Lower lobe of right lung (tissue), 2 donors: ENCODE measurements at regions of chr12 and their contacts with region 1.

Region 1: DNA sequence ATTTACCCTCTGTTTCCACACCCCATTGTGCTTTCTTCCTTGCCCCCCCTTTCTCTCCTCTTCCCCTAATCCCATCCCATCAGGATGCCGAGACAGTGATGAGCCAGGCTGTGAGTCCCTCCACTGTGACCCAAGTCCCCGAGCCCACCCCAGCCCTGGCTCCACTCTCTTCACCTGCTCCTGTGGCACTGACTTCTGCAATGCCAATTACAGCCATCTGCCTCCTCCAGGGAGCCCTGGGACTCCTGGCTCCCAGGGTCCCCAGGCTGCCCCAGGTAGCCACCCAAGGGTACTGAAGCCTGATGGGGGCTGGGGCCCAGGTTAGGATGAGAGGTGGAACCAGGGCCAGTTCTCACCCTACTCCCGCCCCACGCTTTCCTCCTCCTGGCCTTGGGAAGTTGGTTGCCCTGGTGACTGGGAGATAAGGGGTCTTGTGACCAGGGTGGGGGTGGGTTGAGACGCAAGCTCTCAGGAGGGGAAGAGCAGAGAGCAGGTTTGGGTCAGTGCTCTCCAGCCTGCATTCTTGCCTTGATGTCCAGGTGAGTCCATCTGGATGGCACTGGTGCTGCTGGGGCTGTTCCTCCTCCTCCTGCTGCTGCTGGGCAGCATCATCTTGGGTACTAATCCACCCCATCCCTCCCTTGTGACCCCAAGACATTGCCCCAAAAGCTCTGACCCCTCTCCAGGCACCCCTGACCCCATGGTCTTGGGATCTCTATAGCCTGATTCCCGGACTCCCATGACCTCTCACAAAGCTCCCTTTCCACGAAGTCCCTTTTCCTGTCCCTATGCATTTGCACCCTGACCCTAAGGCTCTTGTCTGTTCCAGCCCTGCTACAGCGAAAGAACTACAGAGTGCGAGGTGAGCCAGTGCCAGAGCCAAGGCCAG is 1.2 kb downstream of the AMHR2 start:
- DNase-seq: no peak
- ATAC-seq: no peak
- H3K4me3 ChIP-seq: no peak overlapping the region
- H3K27ac ChIP-seq: no peak overlapping the region
- H3K4me1 ChIP-seq: peaks cover 7% of the 10 kb centered on the region
- H3K27me3 ChIP-seq: no peaks in the 10 kb centered on the region
- CTCF ChIP-seq: no peak

Region 2: DNA sequence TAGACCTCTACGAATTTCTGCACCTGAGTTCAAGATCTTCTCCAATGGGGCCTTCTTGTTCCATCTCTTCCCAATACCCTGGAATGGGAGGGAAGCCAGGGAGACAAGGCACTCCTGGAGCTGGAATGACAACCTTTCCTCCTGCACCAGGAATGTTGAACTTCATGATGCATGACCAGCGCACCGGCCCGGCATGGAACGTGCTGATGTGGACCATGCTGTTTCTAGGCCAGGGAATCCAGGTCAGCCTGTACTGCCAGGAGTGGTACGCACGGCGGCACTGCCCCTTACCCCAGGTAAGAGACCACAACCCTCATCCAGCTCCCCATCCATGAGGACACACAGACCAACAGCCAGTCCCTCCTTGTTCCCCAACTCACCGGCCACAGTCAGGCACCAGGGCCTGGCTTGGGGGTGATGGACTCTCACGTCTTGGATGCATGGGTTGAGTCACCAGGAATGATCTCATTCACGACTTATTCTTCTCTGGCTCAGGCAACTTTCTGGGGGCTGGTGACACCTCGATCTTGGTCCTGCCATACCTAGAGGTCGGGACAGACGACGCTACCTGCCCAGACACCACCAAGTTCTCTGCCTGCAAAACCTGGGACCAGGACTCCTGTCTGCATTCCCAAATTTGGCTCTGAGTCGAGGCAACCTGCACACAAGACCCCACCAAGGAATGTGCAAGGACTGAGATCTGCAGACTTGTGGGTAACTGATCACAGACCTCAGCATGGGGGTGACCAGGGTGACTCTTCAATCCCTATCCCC is 301.1 kb before region 1 on chr12:
- intact Hi-C with region 1: no loop called
- DNase-seq: no peak
- ATAC-seq: peak in 1 of 2 donors; percentile 20
- H3K4me3 ChIP-seq: no peak overlapping the region
- H3K27ac ChIP-seq: no peak overlapping the region
- H3K4me1 ChIP-seq: no peaks in the 10 kb centered on the region
- H3K27me3 ChIP-seq: no peaks in the 10 kb centered on the region
- CTCF ChIP-seq: no peak

Region 3: GRCh38 chr12:53352331-53353256 is 72.3 kb before region 1 on chr12:
- intact Hi-C with region 1: loop called (anchors 5 kb)
- DNase-seq: peak; percentile 81
- ATAC-seq: peak; percentile 97 to 98
- H3K4me3 ChIP-seq: no peak overlapping the region
- H3K27ac ChIP-seq: no peak overlapping the region
- H3K4me1 ChIP-seq: no peaks in the 10 kb centered on the region
- H3K27me3 ChIP-seq: no peaks in the 10 kb centered on the region
- CTCF ChIP-seq: peak; percentile 91

Region 4: DNA sequence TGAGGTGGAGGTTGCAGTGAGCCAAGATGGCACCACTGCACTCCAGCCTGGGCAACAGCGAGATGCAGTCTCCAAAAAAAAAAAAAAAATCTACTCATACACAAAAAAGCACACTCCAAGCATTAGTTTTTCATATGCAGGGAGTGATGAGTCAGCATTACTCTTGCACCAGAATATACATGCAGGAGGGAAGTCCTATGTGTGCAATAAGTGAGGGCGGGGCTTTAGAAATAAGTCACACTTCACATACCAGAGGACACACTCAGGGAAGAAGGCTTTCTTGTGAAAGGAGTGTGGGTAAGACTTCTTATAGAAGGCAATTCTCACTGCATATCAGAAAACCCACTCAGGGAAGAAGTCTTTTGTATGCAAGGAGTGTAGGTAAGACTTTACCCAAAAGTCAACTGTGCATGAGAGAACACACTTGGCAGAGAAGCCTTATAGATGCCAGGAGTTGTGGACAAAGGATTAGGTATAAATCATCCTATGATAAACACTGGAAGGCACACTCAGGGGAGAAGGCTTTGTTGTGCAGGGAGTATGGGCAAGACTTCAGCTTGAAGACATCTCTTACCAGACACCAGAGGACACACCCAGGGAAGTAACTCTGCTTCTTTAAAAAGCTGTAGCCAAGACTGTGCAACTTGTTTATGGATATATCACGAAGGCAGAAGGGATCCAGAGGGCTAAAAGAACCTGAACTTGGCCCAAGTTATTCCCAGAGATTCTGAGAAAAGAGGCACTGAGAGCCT is 150.8 kb after region 1 on chr12:
- intact Hi-C with region 1: no loop called
- DNase-seq: no peak
- ATAC-seq: peak; percentile 69 to 79
- H3K4me3 ChIP-seq: no peak overlapping the region
- H3K27ac ChIP-seq: peak overlapping the region; percentile 59
- H3K4me1 ChIP-seq: peaks cover 31% of the 10 kb centered on the region
- H3K27me3 ChIP-seq: no peaks in the 10 kb centered on the region
- CTCF ChIP-seq: no peak

Region 5: DNA sequence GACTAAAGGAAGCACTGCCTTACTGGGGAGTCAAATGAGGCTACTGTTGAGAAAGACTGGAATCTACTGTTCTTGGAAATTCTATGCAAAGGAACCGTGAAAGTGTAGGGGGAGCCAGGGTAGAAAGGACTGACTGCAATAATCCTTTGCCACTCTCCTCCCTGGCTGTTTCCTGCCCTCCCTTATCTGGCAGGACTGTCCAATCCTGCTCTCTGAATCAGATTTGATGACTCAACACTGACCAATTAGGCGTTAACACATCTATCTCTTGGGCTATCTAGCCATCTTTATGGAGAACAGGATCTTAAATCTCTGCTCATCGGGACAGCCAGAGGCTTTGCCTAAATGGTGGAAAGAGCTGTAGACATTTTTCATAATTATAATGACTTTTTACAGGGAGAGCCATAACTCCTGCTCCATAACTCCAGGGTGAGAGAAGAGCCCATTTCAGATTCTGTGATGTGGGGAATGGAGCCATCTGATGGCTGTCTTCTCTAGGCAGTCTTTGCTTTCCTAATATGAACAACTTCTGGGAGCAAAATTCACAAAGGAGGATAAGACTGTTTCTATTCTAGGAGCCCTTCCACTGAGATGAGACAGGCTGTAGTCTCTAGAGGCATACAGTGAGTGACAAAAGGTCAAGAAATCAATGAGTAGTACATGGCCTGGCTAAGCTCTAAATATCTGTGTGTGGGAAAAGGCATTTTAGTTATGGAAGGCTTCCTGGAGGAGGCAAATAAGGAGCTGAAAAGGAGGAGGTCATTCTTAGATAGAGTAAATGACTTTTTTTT is 395.8 kb after region 1 on chr12:
- intact Hi-C with region 1: no loop called
- DNase-seq: no peak
- ATAC-seq: no peak
- H3K4me3 ChIP-seq: no peak overlapping the region
- H3K27ac ChIP-seq: no peak overlapping the region
- H3K4me1 ChIP-seq: no peaks in the 10 kb centered on the region
- H3K27me3 ChIP-seq: peaks cover 35% of the 10 kb centered on the region
- CTCF ChIP-seq: no peak